ENCODE measurements at regions of chr7 and their contacts with region 1.

Region 1: GRCh38 chr7:105876091-105876963 is at the start of gene ATXN7L1:
- DNase-seq: peak; percentile 81 to 94 (median 89)
- ATAC-seq: peak; percentile 94
- H3K4me3 ChIP-seq: peak within 1 kb of the TSS; percentile 76 to 98
- H3K4me3 Mint-ChIP-seq: peak within 1 kb of the TSS; percentile 97
- H3K27ac ChIP-seq: peak within 1 kb of the TSS; percentile 53 to 78
- H3K27ac Mint-ChIP-seq: peak within 1 kb of the TSS; percentile 96
- H3K4me1 ChIP-seq: peaks cover 37% of the 10 kb centered on the region
- H3K4me1 Mint-ChIP-seq: peaks cover 61% of the 10 kb centered on the region
- H3K27me3 ChIP-seq: no peaks in the 10 kb centered on the region
- H3K27me3 Mint-ChIP-seq: no peaks in the 10 kb centered on the region
- CTCF ChIP-seq: peak; percentile 29
- total RNA-seq, gene ATXN7L1: 17.0 to 18.5 TPM

Region 2: DNA sequence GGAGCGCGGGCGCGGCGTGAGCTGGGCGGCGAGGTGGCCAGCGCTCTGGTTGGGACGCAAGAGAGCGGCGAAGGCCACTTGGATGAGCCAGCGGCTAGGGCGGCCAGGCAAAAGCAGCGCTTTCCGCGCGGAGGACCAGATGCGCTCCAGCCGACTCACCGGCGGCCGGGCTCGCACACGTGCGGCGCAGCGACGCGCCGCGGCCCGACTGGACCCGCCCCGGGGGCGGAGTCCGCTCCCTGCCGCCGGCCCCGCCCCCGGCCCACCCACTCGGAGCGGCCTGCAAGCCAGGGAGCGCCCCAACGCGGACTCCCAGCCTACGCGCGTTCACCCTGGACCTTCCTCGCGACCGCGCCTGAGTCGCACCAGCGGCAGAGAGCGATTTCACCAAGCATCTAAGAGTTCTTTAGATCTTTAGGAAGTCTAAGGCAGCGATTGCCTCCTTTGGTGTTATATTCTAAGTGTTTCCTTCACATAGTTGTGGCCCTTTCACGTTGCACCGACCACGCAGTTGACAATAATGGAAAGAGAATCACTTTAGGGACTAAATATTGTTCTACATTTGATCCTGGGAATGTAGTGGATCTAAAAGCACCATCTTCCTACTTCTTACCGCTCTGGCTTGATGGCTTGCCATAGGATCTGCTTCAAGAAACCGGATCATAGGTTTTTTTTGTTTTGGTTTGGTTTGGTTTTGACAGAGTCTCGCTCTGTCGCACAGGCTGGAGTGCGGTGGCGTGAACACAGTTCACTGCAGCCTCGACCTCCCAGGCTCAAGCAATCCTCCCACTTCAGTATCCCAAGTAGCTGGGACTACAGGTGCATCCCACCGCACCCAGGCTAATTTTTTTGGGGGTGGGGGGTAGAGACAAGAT is 354.0 kb before region 1 on chr7 and contains the start of gene PUS7:
- CTCF ChIA-PET with region 1: no interaction called
- POLR2A ChIA-PET with region 1: no interaction called
- intact Hi-C with region 1: loop called in 1 of 2 experiments (anchors 10 kb)
- DNase-seq: peak; percentile 60 to 91 (median 79)
- ATAC-seq: peak; percentile 95
- H3K4me3 ChIP-seq: peak within 1 kb of the TSS; percentile 44 to 59
- H3K4me3 Mint-ChIP-seq: peak within 1 kb of the TSS; percentile 96
- H3K27ac ChIP-seq: peak within 1 kb of the TSS; percentile 65 to 70
- H3K27ac Mint-ChIP-seq: peak within 1 kb of the TSS; percentile 91
- H3K4me1 ChIP-seq: peaks cover 11% of the 10 kb centered on the region
- H3K4me1 Mint-ChIP-seq: peaks cover 14% of the 10 kb centered on the region
- H3K27me3 ChIP-seq: no peaks in the 10 kb centered on the region
- H3K27me3 Mint-ChIP-seq: no peaks in the 10 kb centered on the region
- CTCF ChIP-seq: no peak
- total RNA-seq, gene PUS7: 2.0 to 2.6 TPM

Region 3: GRCh38 chr7:105713488-105714465 is 162.6 kb before region 1 on chr7:
- CTCF ChIA-PET with region 1: no interaction called
- POLR2A ChIA-PET with region 1: no interaction called
- intact Hi-C with region 1: no loop called
- DNase-seq: no peak
- ATAC-seq: no peak
- H3K4me3 ChIP-seq: no peak overlapping the region
- H3K4me3 Mint-ChIP-seq: no peak overlapping the region
- H3K27ac ChIP-seq: no peak overlapping the region
- H3K27ac Mint-ChIP-seq: no peak overlapping the region
- H3K4me1 ChIP-seq: no peaks in the 10 kb centered on the region
- H3K4me1 Mint-ChIP-seq: no peaks in the 10 kb centered on the region
- H3K27me3 ChIP-seq: no peaks in the 10 kb centered on the region
- H3K27me3 Mint-ChIP-seq: no peaks in the 10 kb centered on the region
- CTCF ChIP-seq: no peak

Region 4: DNA sequence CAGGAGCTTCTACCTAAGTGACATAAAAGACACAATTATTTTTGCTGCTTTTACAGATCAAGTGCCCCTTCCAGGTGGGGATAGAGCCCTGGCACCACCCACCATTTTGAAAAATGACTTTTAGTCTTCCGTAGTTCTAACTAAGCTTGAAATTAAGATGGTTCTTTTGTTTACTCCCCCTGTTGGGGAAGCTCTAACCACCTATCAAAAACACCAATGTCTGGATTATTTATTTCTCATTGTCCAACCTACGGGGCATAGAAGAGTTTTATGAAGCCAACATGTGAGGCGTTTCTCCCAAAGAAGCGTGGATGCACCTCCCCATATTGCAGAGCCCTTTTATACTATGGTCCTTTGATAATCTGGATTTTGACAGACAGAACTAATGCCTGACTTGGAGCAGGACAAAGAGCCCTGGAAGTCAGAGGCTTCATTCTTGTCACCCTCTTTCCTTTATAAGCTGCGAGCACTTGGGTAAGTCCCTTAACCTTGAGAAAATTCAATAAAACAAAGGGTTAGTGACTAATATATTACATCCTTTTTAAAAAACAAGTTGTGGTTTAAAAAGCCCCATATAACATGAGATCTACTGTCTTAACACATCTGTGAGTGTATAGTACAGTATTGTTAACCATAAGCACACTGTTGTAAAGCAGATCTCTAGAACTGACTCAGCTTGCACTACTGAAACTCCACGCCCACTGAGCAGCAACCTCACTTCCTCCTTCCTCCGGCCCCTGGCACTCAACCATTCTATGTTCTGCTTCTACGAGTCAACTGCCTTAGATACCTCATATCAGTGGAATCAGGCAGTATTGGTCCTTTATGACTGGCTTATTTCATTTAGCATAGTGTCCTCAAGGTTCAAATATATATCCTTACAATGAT is 67.4 kb before region 1 on chr7:
- CTCF ChIA-PET with region 1: no interaction called
- POLR2A ChIA-PET with region 1: no interaction called
- intact Hi-C with region 1: loop called (anchors 2 kb)
- DNase-seq: peak; percentile 19 to 90 (median 71)
- ATAC-seq: peak; percentile 90
- H3K4me3 ChIP-seq: peak overlapping the region in 1 of 2 experiments; percentile 6
- H3K4me3 Mint-ChIP-seq: no peak overlapping the region
- H3K27ac ChIP-seq: peak overlapping the region; percentile 23 to 87
- H3K27ac Mint-ChIP-seq: peak overlapping the region; percentile 24
- H3K4me1 ChIP-seq: peaks cover 36% of the 10 kb centered on the region
- H3K4me1 Mint-ChIP-seq: peaks cover 58% of the 10 kb centered on the region
- H3K27me3 ChIP-seq: no peaks in the 10 kb centered on the region
- H3K27me3 Mint-ChIP-seq: no peaks in the 10 kb centered on the region
- CTCF ChIP-seq: no peak

Region 5: DNA sequence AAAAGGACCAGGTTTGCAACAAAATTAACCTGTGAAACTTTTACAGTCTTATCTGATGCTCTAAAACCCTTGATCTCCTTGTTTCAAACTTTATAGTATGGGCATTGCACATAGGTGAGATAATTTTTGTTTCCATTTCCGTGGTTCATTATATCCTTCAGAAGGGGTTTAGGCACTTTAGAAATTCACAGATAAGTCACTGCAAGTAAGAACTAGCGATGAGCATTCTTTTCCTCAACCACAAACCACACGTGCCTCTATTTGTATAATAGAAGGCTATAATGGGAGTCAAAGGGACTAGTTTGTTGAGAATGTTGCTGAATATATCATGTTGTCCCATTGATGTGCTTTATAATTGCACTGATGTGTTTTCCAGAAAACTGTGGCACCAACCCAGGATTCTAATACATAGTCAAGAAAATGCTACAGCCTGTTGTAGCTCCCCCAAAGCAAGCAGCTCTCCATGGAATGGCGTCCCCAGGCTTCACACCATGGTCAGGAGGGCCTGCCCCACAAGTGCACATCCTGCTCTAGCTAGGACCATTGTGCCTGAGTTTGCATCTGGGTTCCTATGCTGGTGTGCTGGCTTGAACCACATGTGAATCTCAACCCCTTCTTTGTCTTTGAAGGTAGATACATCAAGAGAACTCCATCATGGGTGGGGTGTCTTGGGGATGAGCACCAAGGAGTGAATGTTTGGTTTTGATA is 14.1 kb after region 1 on chr7:
- CTCF ChIA-PET with region 1: interaction called, 16 read pairs
- POLR2A ChIA-PET with region 1: interaction called, 9 read pairs
- intact Hi-C with region 1: no loop called
- DNase-seq: peak in 1 of 9 experiments; percentile 30
- ATAC-seq: peak; percentile 31
- H3K4me3 ChIP-seq: no peak overlapping the region
- H3K4me3 Mint-ChIP-seq: no peak overlapping the region
- H3K27ac ChIP-seq: peak overlapping the region in 1 of 2 experiments; percentile 5
- H3K27ac Mint-ChIP-seq: peak overlapping the region; percentile 52
- H3K4me1 ChIP-seq: peaks cover 18% of the 10 kb centered on the region
- H3K4me1 Mint-ChIP-seq: peaks cover 40% of the 10 kb centered on the region
- H3K27me3 ChIP-seq: no peaks in the 10 kb centered on the region
- H3K27me3 Mint-ChIP-seq: no peaks in the 10 kb centered on the region
- CTCF ChIP-seq: no peak

Region 6: DNA sequence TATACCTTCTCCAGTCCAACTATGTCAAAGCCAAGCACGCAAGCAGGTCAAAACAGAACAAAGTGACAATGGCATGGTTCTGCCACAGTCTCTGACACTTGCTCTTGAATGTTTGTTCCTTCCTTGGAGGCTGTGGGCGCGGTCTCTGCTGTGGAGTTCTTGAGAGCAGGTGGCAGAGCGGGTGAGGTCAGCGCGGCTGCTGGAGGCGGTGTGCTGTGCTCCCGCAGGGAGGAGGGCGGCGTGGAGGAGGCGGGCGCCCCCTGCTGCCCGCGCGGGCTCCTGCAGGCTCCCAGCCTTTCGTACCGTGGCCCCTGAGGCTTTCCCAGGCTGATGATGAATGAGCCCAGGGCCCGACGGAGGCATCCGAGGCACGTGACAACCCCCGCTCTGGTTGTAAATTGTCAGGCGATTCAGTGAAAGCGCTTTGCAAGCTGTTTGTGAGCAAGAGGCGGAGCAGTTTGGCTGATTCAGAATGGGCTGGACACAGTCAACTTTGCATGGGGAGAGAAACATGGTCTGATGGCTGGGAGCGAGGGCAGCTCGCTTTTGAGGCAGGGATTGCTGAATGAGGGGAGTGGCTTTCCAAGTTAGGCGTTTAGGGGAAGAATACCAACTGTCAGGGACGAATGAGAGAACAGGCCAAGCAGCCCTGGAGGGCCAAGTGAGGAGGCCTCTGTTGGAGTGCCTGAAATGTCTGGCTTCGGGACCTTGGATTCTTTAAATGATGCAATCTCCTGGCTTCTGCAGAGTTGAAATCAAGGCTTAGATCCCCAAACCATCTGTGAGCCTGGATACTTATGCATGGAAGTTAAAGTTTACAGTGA is 133.3 kb after region 1 on chr7:
- CTCF ChIA-PET with region 1: interaction called, 8 read pairs
- POLR2A ChIA-PET with region 1: no interaction called
- intact Hi-C with region 1: loop called (anchors 1 to 5 kb)
- DNase-seq: peak; percentile 61 to 89 (median 87)
- ATAC-seq: peak; percentile 98
- H3K4me3 ChIP-seq: no peak overlapping the region
- H3K4me3 Mint-ChIP-seq: peak overlapping the region; percentile 16
- H3K27ac ChIP-seq: no peak overlapping the region
- H3K27ac Mint-ChIP-seq: peak overlapping the region; percentile 18
- H3K4me1 ChIP-seq: peaks cover 32% of the 10 kb centered on the region
- H3K4me1 Mint-ChIP-seq: peaks cover 36% of the 10 kb centered on the region
- H3K27me3 ChIP-seq: no peaks in the 10 kb centered on the region
- H3K27me3 Mint-ChIP-seq: no peaks in the 10 kb centered on the region
- CTCF ChIP-seq: peak; percentile 91

Region 7: DNA sequence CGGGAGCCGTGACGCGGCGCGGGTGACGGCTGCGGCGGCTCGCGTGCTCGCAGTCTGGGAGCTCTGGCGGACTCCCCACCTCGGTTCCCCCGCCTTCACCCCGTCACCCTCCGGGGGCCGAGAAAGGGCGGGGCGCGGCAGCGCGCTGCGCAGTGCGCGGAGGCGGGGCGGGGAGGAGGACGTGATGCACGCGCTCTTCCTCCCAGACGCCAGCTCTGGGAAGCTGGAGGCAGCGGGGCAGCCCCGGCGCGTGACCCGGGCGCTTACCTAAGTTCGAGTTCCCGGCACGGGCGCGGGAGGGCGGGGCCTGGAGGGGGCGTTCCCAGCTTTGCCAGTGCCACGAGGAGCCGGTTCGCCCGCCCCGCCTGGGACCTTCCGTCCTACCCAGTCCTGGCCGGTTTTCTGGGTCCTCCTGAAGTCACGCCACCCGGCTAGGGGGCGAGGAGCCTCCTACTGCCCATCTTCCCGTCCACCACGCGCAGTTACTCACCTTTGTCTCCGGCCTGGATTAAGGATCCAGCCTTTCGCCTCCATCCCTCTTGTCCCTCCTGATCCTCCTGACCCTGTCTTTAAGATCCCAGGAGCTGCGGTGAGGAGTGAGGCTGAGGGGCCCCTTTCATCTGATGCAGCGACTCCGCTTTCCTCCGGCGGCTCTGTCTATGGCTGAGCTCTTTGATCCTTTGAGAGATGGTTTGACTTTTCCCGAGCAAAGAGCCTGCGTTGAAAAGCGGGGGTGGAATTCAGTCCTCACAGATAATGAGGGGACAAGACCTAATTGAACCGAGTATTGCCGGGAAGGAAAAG is 408.9 kb after region 1 on chr7:
- CTCF ChIA-PET with region 1: no interaction called
- POLR2A ChIA-PET with region 1: no interaction called
- intact Hi-C with region 1: loop called (anchors 10 kb)
- DNase-seq: peak; percentile 92 to 99 (median 96)
- ATAC-seq: peak; percentile 89
- H3K4me3 ChIP-seq: peak overlapping the region; percentile 81 to 83
- H3K4me3 Mint-ChIP-seq: peak overlapping the region; percentile 96
- H3K27ac ChIP-seq: peak overlapping the region; percentile 71 to 93
- H3K27ac Mint-ChIP-seq: peak overlapping the region; percentile 98
- H3K4me1 ChIP-seq: peaks cover 17% of the 10 kb centered on the region
- H3K4me1 Mint-ChIP-seq: peaks cover 27% of the 10 kb centered on the region
- H3K27me3 ChIP-seq: no peaks in the 10 kb centered on the region
- H3K27me3 Mint-ChIP-seq: peaks cover 2% of the 10 kb centered on the region
- CTCF ChIP-seq: no peak

Measured in CD8-positive, alpha-beta T cell (primary cell).